ENCODE measurements at regions of chr1 and their contacts with region 1.

Region 1: DNA sequence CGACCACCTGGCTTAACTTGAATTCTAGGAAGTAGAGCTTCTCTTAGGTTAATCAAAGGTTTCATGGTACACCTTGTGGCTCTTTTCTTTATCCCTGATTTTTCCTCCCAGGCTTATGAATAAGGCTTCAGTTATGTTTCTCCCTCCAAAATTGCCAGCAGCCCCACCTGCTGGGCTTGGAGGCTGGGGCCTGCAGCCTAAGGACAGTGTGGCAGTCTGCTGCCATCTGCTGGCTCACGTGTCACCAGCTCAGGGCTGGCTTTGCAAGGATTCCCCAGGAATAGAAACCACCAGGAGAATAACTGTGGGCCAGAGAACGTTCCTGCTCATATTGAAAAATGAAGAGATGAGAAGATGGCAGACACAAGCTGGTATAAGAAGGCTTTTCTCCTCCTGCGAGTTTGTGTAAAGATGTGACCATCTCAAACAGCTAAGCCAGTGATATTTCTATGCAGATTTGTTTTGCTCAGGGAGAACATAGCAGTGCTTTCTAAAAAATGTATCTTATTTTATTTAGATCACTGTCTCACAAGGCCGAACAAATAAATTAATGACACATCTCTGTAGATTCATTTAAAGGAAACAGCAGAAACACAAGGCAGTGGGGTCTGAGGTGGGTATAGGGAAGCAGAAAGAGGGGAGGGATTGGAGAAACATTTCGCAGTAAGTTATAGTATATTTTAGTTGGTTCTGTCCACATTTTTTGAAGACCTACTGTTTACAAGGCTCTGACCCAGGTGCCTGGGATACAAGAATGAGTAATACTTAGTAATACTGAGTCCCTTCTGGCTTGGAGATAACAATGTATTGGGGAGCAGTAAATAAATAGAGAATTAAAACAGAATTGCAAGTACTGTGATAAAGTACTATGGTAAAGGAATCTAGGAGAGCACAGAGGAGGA is 291.1 kb upstream of the SGIP1 start:
- DNase-seq: peak; percentile 87
- H3K4me3 Mint-ChIP-seq: no peak overlapping the region
- H3K27ac Mint-ChIP-seq: no peak overlapping the region
- H3K4me1 Mint-ChIP-seq: peaks cover 7% of the 10 kb centered on the region
- H3K27me3 Mint-ChIP-seq: peaks cover 11% of the 10 kb centered on the region
- CTCF ChIP-seq: peak; percentile 99

Region 2: GRCh38 chr1:65235867-65236805 is 1006.8 kb before region 1 on chr1:
- CTCF ChIA-PET with region 1: no interaction called
- POLR2A ChIA-PET with region 1: no interaction called
- intact Hi-C with region 1: loop called (anchors 2 kb)
- DNase-seq: peak; percentile 72
- H3K4me3 Mint-ChIP-seq: no peak overlapping the region
- H3K27ac Mint-ChIP-seq: no peak overlapping the region
- H3K4me1 Mint-ChIP-seq: peaks cover 2% of the 10 kb centered on the region
- H3K27me3 Mint-ChIP-seq: no peaks in the 10 kb centered on the region
- CTCF ChIP-seq: peak; percentile 68

Region 3: GRCh38 chr1:65985393-65986066 is 257.4 kb before region 1 on chr1:
- CTCF ChIA-PET with region 1: interaction called, 13 read pairs
- POLR2A ChIA-PET with region 1: no interaction called
- intact Hi-C with region 1: no loop called
- DNase-seq: no peak
- H3K4me3 Mint-ChIP-seq: no peak overlapping the region
- H3K27ac Mint-ChIP-seq: no peak overlapping the region
- H3K4me1 Mint-ChIP-seq: no peaks in the 10 kb centered on the region
- H3K27me3 Mint-ChIP-seq: peaks cover 66% of the 10 kb centered on the region
- CTCF ChIP-seq: no peak

Region 4: DNA sequence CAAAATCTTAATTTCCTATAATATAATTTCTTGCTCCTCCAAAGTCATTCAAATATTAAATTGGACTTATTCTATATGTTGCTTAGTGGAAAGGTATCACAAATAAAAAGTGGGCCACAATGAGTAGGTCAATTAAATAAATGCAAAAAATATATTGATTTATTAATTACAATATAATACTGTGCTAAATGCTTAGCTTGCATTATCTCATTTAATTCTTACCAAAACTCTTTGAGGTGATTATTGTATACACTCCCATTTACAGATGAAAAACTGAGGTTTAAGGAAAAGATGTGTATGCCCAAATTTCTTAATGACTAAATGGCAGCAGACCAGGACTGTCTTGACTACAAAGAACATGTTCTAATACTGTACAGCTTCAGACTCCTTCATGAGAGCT is 34.3 kb before region 1 on chr1:
- CTCF ChIA-PET with region 1: interaction called, 11 read pairs
- POLR2A ChIA-PET with region 1: no interaction called
- intact Hi-C with region 1: no loop called
- DNase-seq: no peak
- H3K4me3 Mint-ChIP-seq: no peak overlapping the region
- H3K27ac Mint-ChIP-seq: no peak overlapping the region
- H3K4me1 Mint-ChIP-seq: no peaks in the 10 kb centered on the region
- H3K27me3 Mint-ChIP-seq: peaks cover 11% of the 10 kb centered on the region
- CTCF ChIP-seq: no peak

Region 5: DNA sequence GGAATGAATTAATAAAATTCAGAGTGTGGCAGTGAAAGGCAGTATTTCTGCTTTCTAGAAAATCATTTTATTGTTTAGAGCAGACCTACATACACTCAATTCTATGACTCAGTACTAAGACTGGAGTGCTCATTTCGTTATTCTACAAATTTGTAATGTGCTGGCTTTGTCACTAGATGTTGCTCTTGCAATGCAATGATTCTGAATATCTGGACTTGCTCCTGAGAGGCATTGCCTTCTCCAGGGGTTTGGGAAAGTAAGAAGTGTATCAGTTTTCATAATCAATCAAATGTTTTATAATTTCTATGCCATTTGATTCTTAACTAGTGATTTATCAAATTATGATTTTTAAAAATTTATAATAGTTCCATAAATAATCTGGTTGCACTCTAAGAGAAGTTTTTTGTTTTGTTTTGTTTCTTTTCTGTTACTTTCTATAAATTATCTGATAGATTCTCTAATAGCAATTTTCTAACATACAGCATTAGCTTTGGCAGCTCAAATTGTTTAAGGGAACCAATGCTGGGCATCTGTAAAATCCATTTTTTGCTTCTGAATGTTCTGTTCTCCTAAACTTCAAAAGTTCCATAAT is 10.5 kb after region 1 on chr1:
- CTCF ChIA-PET with region 1: interaction called, 37 read pairs
- POLR2A ChIA-PET with region 1: no interaction called
- intact Hi-C with region 1: no loop called
- DNase-seq: peak; percentile 77
- H3K4me3 Mint-ChIP-seq: no peak overlapping the region
- H3K27ac Mint-ChIP-seq: no peak overlapping the region
- H3K4me1 Mint-ChIP-seq: peaks cover 32% of the 10 kb centered on the region
- H3K27me3 Mint-ChIP-seq: no peaks in the 10 kb centered on the region
- CTCF ChIP-seq: peak; percentile 77

Region 6: GRCh38 chr1:66468722-66469121 is 225.8 kb after region 1 on chr1:
- CTCF ChIA-PET with region 1: interaction called, 17 read pairs
- POLR2A ChIA-PET with region 1: no interaction called
- intact Hi-C with region 1: no loop called
- DNase-seq: no peak
- H3K4me3 Mint-ChIP-seq: no peak overlapping the region
- H3K27ac Mint-ChIP-seq: no peak overlapping the region
- H3K4me1 Mint-ChIP-seq: peaks cover 13% of the 10 kb centered on the region
- H3K27me3 Mint-ChIP-seq: no peaks in the 10 kb centered on the region
- CTCF ChIP-seq: no peak

Measured in MCF 10A (cell line).